Heart right ventricle (tissue), 16 donors: ENCODE measurements at regions of chr9 and their contacts with region 1.

Region 1: GRCh38 chr9:23412458-23412857 is 413.6 kb downstream of the ELAVL2 start:
- DNase-seq: no peak
- ATAC-seq: no peak
- H3K4me3 ChIP-seq: no peak overlapping the region
- H3K27ac ChIP-seq: no peak overlapping the region
- H3K4me1 ChIP-seq: no peaks in the 10 kb centered on the region
- H3K27me3 ChIP-seq: no peaks in the 10 kb centered on the region
- CTCF ChIP-seq: no peak

Region 2: GRCh38 chr9:23160952-23161469 is 251.4 kb before region 1 on chr9:
- intact Hi-C with region 1: no loop called
- DNase-seq: no peak
- ATAC-seq: no peak
- H3K4me3 ChIP-seq: no peak overlapping the region
- H3K27ac ChIP-seq: no peak overlapping the region
- H3K4me1 ChIP-seq: no peaks in the 10 kb centered on the region
- H3K27me3 ChIP-seq: no peaks in the 10 kb centered on the region
- CTCF ChIP-seq: no peak

Region 3: DNA sequence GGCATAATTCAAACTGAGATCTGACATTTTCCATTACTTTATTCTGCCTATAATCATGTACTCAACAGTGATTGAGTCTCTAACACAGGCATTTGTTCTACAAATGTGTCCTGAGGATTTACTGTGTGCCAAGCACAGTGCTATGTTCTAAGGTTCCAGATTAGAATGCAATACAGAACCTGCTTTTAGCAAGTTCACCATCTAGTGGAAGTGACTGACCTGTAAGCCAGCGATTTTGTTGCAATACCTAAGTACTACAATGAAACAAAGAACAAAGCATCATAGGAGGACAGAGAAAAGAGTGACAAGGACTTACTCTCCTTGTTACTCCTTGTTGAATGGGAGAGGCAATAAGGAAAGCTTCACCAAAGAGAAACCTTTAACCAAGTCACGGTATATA is 65.5 kb after region 1 on chr9:
- intact Hi-C with region 1: loop called in 1 of 10 experiments (anchors 10 kb)
- DNase-seq: no peak
- ATAC-seq: no peak
- H3K4me3 ChIP-seq: no peak overlapping the region
- H3K27ac ChIP-seq: no peak overlapping the region
- H3K4me1 ChIP-seq: no peaks in the 10 kb centered on the region
- H3K27me3 ChIP-seq: no peaks in the 10 kb centered on the region
- CTCF ChIP-seq: no peak

Region 4: DNA sequence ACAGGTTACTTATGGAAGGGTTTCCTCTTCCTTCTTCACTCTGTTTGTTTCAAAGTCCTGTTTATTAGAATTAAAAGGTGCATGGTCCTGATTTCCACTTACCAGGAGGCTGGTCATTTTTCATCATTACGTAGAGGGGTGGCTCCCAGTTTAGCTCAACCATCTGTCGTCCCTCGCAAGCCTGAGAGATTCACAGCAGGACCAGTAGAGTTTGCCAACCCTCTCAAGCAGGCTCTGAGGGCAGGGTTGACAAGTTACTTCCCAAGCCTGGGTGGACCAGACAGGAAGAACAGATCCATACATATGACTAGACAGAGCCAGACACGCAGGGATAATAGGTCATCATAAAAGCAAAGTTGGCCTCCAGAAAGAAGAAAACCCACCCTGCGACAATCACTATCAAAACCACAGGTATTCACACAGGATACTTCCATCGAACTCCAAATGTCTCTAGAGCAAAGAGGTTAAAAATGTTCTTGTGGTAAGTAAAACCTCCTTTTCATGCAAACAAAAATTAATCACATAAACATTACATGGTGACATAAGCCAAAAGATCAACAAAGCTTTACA is 261.6 kb after region 1 on chr9:
- intact Hi-C with region 1: no loop called
- DNase-seq: no peak
- ATAC-seq: no peak
- H3K4me3 ChIP-seq: no peak overlapping the region
- H3K27ac ChIP-seq: no peak overlapping the region
- H3K4me1 ChIP-seq: no peaks in the 10 kb centered on the region
- H3K27me3 ChIP-seq: no peaks in the 10 kb centered on the region
- CTCF ChIP-seq: no peak